ENCODE measurements at regions of chr17 and their contacts with region 1.

Region 1: GRCh38 chr17:58447039-58447975 is 30.0 kb upstream of the RNF43 start:
- DNase-seq: peak; percentile 39 to 75 (median 42)
- H3K4me3 ChIP-seq: no peak overlapping the region
- H3K4me3 Mint-ChIP-seq: no peak overlapping the region
- H3K27ac ChIP-seq: no peak overlapping the region
- H3K27ac Mint-ChIP-seq: no peak overlapping the region
- H3K4me1 ChIP-seq: no peaks in the 10 kb centered on the region
- H3K4me1 Mint-ChIP-seq: no peaks in the 10 kb centered on the region
- H3K27me3 ChIP-seq: no peaks in the 10 kb centered on the region
- H3K27me3 Mint-ChIP-seq: no peaks in the 10 kb centered on the region

Region 2: GRCh38 chr17:58427807-58428206 is 19.5 kb before region 1 on chr17:
- CTCF ChIA-PET with region 1: no interaction called
- POLR2A ChIA-PET with region 1: no interaction called
- DNase-seq: no peak
- H3K4me3 ChIP-seq: no peak overlapping the region
- H3K4me3 Mint-ChIP-seq: no peak overlapping the region
- H3K27ac ChIP-seq: no peak overlapping the region
- H3K27ac Mint-ChIP-seq: peak overlapping the region in 1 of 8 donors; percentile 17
- H3K4me1 ChIP-seq: no peaks in the 10 kb centered on the region
- H3K4me1 Mint-ChIP-seq: no peaks in the 10 kb centered on the region
- H3K27me3 ChIP-seq: no peaks in the 10 kb centered on the region
- H3K27me3 Mint-ChIP-seq: no peaks in the 10 kb centered on the region

Region 3: GRCh38 chr17:58463821-58464220 is 16.5 kb after region 1 on chr17:
- CTCF ChIA-PET with region 1: no interaction called
- POLR2A ChIA-PET with region 1: interaction called, 13 read pairs
- DNase-seq: no peak
- H3K4me3 ChIP-seq: no peak overlapping the region
- H3K4me3 Mint-ChIP-seq: no peak overlapping the region
- H3K27ac ChIP-seq: no peak overlapping the region
- H3K27ac Mint-ChIP-seq: no peak overlapping the region
- H3K4me1 ChIP-seq: no peaks in the 10 kb centered on the region
- H3K4me1 Mint-ChIP-seq: no peaks in the 10 kb centered on the region
- H3K27me3 ChIP-seq: no peaks in the 10 kb centered on the region
- H3K27me3 Mint-ChIP-seq: no peaks in the 10 kb centered on the region